Sigmoid colon (tissue), 7 donors: ENCODE measurements at regions of chr12 and their contacts with region 1.

Region 1: DNA sequence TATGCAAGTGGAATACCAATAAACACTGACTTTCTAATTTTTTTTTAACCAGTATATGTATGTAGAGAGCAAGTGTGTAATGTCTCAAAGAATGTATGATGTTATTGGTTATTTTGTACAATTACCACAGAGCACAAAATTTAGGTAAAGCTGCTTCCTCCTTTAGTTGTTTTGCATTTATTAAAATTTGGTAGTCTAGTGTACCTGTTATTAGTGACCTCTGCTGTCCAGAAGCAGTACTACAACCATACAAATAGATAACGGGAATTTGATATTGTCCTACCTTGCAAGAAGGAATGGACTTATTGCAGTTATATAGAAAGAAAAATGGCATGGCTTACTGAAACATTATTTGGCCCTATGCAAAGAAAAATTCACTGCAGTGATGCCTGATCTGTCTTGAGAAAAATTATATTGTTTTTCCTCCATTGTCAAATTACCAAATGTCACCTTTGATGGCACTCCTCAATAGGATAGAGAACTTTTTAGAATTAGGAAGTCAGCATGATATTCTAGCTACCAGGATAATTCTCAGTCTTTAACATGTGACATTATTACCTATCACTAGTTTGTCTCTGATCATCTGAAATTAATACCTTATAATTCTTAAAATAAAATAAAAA is 153.9 kb upstream of the RMST start:
- DNase-seq: no peak
- H3K4me3 ChIP-seq: no peak overlapping the region
- H3K27ac ChIP-seq: no peak overlapping the region
- H3K4me1 ChIP-seq: no peaks in the 10 kb centered on the region
- H3K27me3 ChIP-seq: no peaks in the 10 kb centered on the region
- CTCF ChIP-seq: peak in 3 of 4 experiments; percentile 33 to 71 (median 46)
- EP300 ChIP-seq: no peak
- POLR2A ChIP-seq: no peak

Region 2: DNA sequence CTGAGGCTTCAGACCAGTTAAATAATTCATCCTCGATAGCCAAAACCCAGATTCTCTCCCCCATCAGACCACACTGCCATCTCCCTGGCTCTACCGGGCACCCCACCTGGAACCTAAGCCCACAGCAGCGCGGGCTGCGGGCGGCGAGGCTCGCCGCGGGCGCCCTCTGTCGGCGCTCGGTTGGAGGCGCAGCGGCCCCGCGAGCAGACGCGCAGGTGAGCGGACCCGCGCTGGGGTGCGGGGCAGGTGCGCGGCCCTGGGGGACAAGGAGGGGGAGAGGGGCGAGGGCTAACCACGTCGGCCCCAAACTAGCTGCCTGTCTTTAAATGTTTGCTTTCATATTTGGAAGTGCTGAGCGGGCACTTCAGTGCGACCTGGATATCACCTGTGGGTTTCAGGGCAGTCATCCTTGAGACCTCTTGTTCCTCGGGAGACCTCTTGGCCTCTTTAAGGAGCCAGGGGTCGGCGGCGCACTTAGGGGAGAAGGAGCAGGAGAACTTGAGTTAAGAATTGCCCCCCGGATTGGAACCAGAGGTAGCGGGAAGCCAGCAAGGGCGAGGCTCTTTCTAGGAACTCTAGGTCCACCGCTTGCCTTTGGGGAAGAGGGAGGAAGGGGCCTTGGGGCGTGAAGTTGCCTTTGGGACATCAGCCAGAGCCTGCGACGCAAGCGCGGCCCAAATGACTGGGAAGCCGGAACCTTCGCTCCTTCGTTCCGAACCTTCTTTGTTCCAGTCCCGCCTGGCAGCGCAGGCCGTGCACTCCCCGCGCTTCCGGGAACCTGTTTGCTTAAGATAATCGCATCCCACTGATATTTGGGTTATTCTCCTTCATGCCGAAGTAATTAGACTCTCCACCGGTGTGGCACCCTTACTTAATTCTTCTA is 323.0 kb before region 1 on chr12:
- intact Hi-C with region 1: loop called (anchors 5 kb)
- DNase-seq: no peak
- H3K4me3 ChIP-seq: peak overlapping the region; percentile 1 to 53 (median 38)
- H3K27ac ChIP-seq: no peak overlapping the region
- H3K4me1 ChIP-seq: peaks cover 0 to 12% (median 11%) of the 10 kb centered on the region in 4 donors
- H3K27me3 ChIP-seq: peaks cover 0 to 17% (median 4%) of the 10 kb centered on the region in 3 donors
- CTCF ChIP-seq: peak in 1 of 4 experiments; percentile 84
- EP300 ChIP-seq: no peak
- POLR2A ChIP-seq: no peak